ENCODE measurements at regions of chr20 and their contacts with region 1.

Region 1: DNA sequence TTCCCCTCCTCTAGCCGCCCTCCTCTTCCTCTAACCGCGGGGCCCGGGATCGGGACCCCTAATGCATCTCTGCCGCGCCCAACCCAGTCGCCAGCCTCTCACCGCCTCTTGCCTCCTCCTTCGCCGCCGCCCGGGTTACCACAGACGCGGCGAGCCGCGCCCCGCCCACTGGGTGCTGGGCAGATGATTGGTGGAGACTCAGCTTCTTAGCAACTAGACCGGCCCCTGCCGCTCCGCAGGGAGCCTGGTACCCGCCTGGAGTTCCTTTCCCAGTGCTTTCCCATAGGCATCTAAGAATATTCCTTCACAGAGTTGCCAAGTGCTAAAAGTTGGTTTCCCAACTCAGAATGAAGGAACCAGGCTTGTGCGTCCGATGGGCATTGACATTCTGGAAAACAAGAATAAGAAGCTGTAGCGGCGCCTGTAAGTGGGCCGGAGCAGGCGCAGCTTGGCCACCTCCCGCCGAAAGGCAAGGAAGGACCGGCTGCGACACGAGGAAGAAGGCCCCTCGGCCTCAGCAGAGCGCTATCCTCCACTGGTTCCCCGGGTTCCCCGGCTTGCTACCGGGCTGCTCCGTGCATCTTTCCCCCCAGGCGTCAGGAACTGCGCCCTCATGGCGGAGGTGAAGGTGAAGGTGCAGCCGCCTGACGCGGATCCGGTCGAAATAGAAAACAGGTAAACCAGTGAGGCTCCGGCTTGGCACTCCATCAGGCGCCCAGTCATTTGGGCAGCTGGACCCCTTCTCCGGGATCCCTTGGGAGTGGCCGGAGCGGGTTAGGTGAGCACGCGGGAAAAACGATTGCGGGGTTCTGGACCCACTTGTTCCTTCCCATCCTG is at the starts of genes DZANK1 and POLR3F:
- DNase-seq: peak; percentile 84 to 95 (median 93)
- ATAC-seq: peak; percentile 90
- H3K4me3 ChIP-seq: peak within 1 kb of the TSS; percentile 79 to 93
- H3K4me3 Mint-ChIP-seq: peak within 1 kb of the TSS; percentile 97
- H3K27ac ChIP-seq: peak within 1 kb of the TSS; percentile 73 to 92
- H3K27ac Mint-ChIP-seq: peak within 1 kb of the TSS; percentile 97
- H3K4me1 ChIP-seq: peaks cover 16% of the 10 kb centered on the region
- H3K4me1 Mint-ChIP-seq: peaks cover 24% of the 10 kb centered on the region
- H3K27me3 ChIP-seq: no peaks in the 10 kb centered on the region
- H3K27me3 Mint-ChIP-seq: no peaks in the 10 kb centered on the region
- CTCF ChIP-seq: no peak
- total RNA-seq, gene DZANK1: 2.0 to 2.3 TPM
- total RNA-seq, gene POLR3F: 11.5 TPM

Region 2: GRCh38 chr20:18412221-18412901 is 54.8 kb before region 1 on chr20:
- CTCF ChIA-PET with region 1: no interaction called
- POLR2A ChIA-PET with region 1: no interaction called
- intact Hi-C with region 1: no loop called
- DNase-seq: no peak
- ATAC-seq: no peak
- H3K4me3 ChIP-seq: no peak overlapping the region
- H3K4me3 Mint-ChIP-seq: no peak overlapping the region
- H3K27ac ChIP-seq: no peak overlapping the region
- H3K27ac Mint-ChIP-seq: no peak overlapping the region
- H3K4me1 ChIP-seq: no peaks in the 10 kb centered on the region
- H3K4me1 Mint-ChIP-seq: peaks cover 3% of the 10 kb centered on the region
- H3K27me3 ChIP-seq: no peaks in the 10 kb centered on the region
- H3K27me3 Mint-ChIP-seq: no peaks in the 10 kb centered on the region
- CTCF ChIP-seq: no peak

Region 3: DNA sequence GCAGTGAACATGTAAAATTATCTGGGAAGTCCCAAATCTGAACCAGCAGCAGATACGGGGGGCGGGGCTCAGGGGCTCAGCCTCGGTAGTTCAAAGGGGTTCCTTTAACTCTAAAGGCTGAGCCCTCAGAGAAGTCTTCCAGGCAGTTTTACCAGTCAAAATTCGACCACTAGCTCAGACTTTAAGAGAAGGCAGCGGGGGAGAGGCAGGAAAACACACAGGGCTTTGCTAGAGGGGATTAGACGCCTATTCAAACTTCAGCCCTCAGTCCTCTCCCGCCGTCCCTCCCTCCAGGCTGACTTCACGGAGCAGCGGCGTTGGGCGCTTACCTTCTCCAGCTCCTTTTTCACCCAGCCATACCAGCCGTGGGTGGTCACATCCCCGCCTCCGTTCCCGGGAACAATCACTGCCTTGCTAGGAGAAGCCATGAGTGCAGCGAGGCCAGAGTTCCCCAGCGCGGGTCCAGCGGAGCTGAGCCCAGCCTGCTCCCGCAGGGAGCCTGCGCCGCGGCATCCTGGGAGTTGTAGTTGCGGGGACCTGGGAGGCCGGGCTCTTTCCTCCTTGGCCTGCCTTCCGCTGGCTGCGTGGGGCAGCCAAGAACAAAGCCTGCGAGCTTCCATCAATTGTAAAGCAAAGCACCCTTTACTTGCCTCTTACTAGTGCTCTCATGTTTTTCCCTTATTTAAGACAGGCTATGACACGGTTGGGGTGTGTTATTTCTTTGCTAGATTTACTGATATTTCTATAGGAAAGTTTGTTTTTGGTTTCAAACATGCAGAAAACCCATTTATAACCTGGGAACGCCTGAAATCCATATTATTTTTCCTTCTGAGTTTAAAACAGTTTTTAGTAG is 29.9 kb after region 1 on chr20 and contains the start of gene RBBP9:
- CTCF ChIA-PET with region 1: interaction called, 7 read pairs
- POLR2A ChIA-PET with region 1: interaction called, 13 read pairs
- intact Hi-C with region 1: loop called (anchors 1 kb)
- DNase-seq: peak; percentile 31 to 86 (median 75)
- ATAC-seq: peak; percentile 98
- H3K4me3 ChIP-seq: peak within 1 kb of the TSS; percentile 77 to 93
- H3K4me3 Mint-ChIP-seq: peak within 1 kb of the TSS; percentile 96
- H3K27ac ChIP-seq: peak within 1 kb of the TSS; percentile 50 to 62
- H3K27ac Mint-ChIP-seq: peak within 1 kb of the TSS; percentile 90
- H3K4me1 ChIP-seq: peaks cover 16% of the 10 kb centered on the region
- H3K4me1 Mint-ChIP-seq: peaks cover 20% of the 10 kb centered on the region
- H3K27me3 ChIP-seq: no peaks in the 10 kb centered on the region
- H3K27me3 Mint-ChIP-seq: no peaks in the 10 kb centered on the region
- CTCF ChIP-seq: no peak
- total RNA-seq, gene RBBP9: 2.1 to 2.3 TPM

Region 4: GRCh38 chr20:18587665-18588573 is 120.8 kb after region 1 on chr20 and contains the start of gene DTD1:
- CTCF ChIA-PET with region 1: no interaction called
- POLR2A ChIA-PET with region 1: no interaction called
- intact Hi-C with region 1: loop called (anchors 2 to 5 kb)
- DNase-seq: peak; percentile 53 to 89 (median 82)
- ATAC-seq: peak; percentile 82
- H3K4me3 ChIP-seq: peak within 1 kb of the TSS; percentile 65 to 83
- H3K4me3 Mint-ChIP-seq: peak within 1 kb of the TSS; percentile 95
- H3K27ac ChIP-seq: peak within 1 kb of the TSS; percentile 56 to 83
- H3K27ac Mint-ChIP-seq: peak within 1 kb of the TSS; percentile 94
- H3K4me1 ChIP-seq: peaks cover 18% of the 10 kb centered on the region
- H3K4me1 Mint-ChIP-seq: peaks cover 32% of the 10 kb centered on the region
- H3K27me3 ChIP-seq: no peaks in the 10 kb centered on the region
- H3K27me3 Mint-ChIP-seq: peaks cover 6% of the 10 kb centered on the region
- CTCF ChIP-seq: peak; percentile 45
- total RNA-seq, gene DTD1: 12.5 to 14.5 TPM

Region 5: GRCh38 chr20:20052074-20052970 is 1585.2 kb after region 1 on chr20 and contains the starts of genes CFAP61 and CRNKL1:
- CTCF ChIA-PET with region 1: no interaction called
- POLR2A ChIA-PET with region 1: no interaction called
- intact Hi-C with region 1: loop called in 1 of 2 experiments (anchors 2 kb)
- DNase-seq: peak; percentile 93 to 99 (median 98)
- ATAC-seq: peak; percentile 94
- H3K4me3 ChIP-seq: peak within 1 kb of the TSS; percentile 86 to 96
- H3K4me3 Mint-ChIP-seq: peak within 1 kb of the TSS; percentile 99
- H3K27ac ChIP-seq: peak within 1 kb of the TSS; percentile 86 to 92
- H3K27ac Mint-ChIP-seq: peak within 1 kb of the TSS; percentile 98
- H3K4me1 ChIP-seq: peaks cover 12% of the 10 kb centered on the region
- H3K4me1 Mint-ChIP-seq: peaks cover 29% of the 10 kb centered on the region
- H3K27me3 ChIP-seq: no peaks in the 10 kb centered on the region
- H3K27me3 Mint-ChIP-seq: peaks cover 10% of the 10 kb centered on the region
- CTCF ChIP-seq: no peak
- total RNA-seq, gene CFAP61: not detected
- total RNA-seq, gene CRNKL1: 34.1 to 39.7 TPM